ENCODE measurements at regions of chr19 and their contacts with region 1.

Region 1: GRCh38 chr19:24033301-24033962 is 53.6 kb upstream of the ZNF254 start:
- DNase-seq: peak; percentile 95
- H3K4me3 ChIP-seq: peak overlapping the region; percentile 69 to 85 (median 74)
- H3K27ac ChIP-seq: peak overlapping the region; percentile 92 to 96 (median 95)
- H3K4me1 ChIP-seq: peaks cover 0 to 31% (median 24%) of the 10 kb centered on the region in 4 donors
- H3K27me3 ChIP-seq: no peaks in the 10 kb centered on the region
- CTCF ChIP-seq: no peak
- EP300 ChIP-seq: no peak
- POLR2A ChIP-seq: peak; percentile 46 to 63

Region 2: DNA sequence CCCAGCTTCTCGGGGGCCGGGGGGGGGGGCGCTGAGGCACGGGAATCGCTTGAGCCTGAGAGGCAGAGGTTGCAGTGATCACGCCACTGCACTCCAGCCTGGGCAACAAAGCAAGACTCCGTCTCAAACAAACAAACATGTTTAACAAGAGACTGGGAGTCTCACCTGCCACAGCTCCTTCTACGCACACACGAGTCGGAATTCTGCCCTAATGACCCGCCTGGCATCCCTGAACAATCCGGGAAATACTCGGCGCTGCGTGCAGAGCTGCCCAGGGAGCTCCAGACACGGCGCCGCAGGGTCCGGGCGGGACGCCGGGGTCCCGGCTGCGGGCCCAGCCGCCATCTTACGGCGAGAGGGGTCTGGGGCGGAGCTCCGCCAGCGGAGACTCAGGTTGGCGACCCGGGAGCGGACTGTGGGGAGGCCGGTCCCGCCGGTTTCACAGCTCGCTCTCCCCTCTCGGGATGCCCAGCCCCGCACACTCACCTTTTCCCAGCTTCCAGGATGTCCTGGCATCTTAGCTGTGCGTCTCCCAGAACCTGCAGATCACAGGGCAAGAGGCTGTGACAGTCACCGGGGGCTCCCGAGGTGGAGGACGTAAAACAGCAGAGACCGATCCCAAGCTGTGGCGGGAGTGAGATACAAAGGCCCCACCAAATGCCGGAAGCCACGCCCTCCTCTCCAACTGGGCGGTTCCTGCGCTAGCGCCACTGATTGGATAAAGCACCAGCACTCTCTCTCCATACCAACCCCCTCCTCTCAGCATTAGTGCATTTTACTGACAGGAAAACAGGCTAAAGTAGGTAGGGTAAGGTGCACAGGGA is 759.6 kb before region 1 on chr19:
- intact Hi-C with region 1: loop called (anchors 10 kb)
- DNase-seq: peak; percentile 96
- H3K4me3 ChIP-seq: peak overlapping the region; percentile 76 to 96 (median 90)
- H3K27ac ChIP-seq: peak overlapping the region; percentile 83 to 90 (median 90)
- H3K4me1 ChIP-seq: peaks cover 0 to 13% (median 10%) of the 10 kb centered on the region in 4 donors
- H3K27me3 ChIP-seq: no peaks in the 10 kb centered on the region
- CTCF ChIP-seq: no peak
- EP300 ChIP-seq: no peak
- POLR2A ChIP-seq: peak; percentile 65 to 68

Region 3: GRCh38 chr19:23395041-23395721 is 638.3 kb before region 1 on chr19 and contains the start of gene ZNF91:
- intact Hi-C with region 1: loop called (anchors 10 kb)
- DNase-seq: peak; percentile 98
- H3K4me3 ChIP-seq: peak within 1 kb of the TSS; percentile 76 to 90 (median 83)
- H3K27ac ChIP-seq: peak within 1 kb of the TSS; percentile 92 to 97 (median 96)
- H3K4me1 ChIP-seq: peaks cover 0 to 42% (median 23%) of the 10 kb centered on the region in 4 donors
- H3K27me3 ChIP-seq: no peaks in the 10 kb centered on the region
- CTCF ChIP-seq: no peak
- EP300 ChIP-seq: no peak
- POLR2A ChIP-seq: peak; percentile 82 to 87
- total RNA-seq, gene ZNF91: 39.8 to 88.1 (median 58.2) TPM

Region 4: DNA sequence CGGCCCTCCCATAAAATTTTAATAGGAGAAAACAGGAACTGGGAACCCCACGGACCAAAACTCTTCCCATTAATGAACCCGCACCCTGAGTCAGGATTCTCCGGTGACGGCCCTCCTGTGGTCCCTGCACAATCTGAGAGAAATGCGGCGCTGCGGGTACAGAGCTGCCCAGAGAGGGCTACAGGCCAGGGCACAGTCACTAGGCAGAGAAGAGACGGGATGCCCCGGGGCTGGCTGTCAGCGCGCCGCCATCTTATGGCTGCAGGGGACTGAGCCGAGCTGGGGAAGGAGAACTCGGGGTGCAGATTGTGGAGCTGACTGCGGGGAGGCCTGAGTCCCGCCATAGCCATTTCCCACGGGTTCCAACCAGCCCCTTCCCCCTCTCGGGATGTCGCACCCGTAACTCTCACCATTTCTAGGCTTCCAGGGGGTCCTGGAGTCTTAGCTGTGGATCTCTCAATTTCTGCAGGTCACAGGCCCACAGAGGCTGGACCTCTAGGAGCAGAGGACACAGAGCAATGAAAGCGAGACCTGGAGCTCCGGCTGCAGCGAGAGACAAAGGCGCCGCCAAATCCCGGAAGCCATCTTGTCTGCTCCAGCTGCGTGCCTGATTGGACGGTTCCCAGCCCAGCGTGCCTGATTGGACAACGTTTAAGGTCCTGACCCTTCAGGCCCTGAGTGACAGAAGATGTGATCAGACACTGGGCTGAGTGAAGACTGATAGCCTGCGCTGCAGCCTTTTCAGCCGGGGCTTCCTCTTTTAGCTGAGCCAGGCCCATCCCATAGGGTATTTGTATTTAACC is 346.6 kb before region 1 on chr19 and contains the start of gene ZNF675:
- intact Hi-C with region 1: loop called (anchors 5 kb)
- DNase-seq: peak; percentile 96
- H3K4me3 ChIP-seq: peak within 1 kb of the TSS; percentile 64 to 84 (median 81)
- H3K27ac ChIP-seq: peak within 1 kb of the TSS; percentile 80 to 91 (median 84)
- H3K4me1 ChIP-seq: peaks cover 0 to 12% (median 6%) of the 10 kb centered on the region in 4 donors
- H3K27me3 ChIP-seq: no peaks in the 10 kb centered on the region
- CTCF ChIP-seq: no peak
- EP300 ChIP-seq: no peak
- POLR2A ChIP-seq: no peak
- total RNA-seq, gene ZNF675: 5.4 to 8.1 (median 6.7) TPM

Region 5: GRCh38 chr19:23758187-23759074 is 275.0 kb before region 1 on chr19 and contains the start of gene ZNF681:
- intact Hi-C with region 1: loop called (anchors 5 kb)
- DNase-seq: peak; percentile 93
- H3K4me3 ChIP-seq: peak within 1 kb of the TSS; percentile 45 to 70 (median 66)
- H3K27ac ChIP-seq: peak within 1 kb of the TSS; percentile 70 to 75 (median 74)
- H3K4me1 ChIP-seq: peaks cover 0 to 23% (median 7%) of the 10 kb centered on the region in 4 donors
- H3K27me3 ChIP-seq: no peaks in the 10 kb centered on the region
- CTCF ChIP-seq: peak in 1 of 4 experiments; percentile 9
- EP300 ChIP-seq: no peak
- POLR2A ChIP-seq: peak in 1 of 2 donors; percentile 9
- total RNA-seq, gene ZNF681: 0.55 to 1.2 (median 0.70) TPM

Region 6: DNA sequence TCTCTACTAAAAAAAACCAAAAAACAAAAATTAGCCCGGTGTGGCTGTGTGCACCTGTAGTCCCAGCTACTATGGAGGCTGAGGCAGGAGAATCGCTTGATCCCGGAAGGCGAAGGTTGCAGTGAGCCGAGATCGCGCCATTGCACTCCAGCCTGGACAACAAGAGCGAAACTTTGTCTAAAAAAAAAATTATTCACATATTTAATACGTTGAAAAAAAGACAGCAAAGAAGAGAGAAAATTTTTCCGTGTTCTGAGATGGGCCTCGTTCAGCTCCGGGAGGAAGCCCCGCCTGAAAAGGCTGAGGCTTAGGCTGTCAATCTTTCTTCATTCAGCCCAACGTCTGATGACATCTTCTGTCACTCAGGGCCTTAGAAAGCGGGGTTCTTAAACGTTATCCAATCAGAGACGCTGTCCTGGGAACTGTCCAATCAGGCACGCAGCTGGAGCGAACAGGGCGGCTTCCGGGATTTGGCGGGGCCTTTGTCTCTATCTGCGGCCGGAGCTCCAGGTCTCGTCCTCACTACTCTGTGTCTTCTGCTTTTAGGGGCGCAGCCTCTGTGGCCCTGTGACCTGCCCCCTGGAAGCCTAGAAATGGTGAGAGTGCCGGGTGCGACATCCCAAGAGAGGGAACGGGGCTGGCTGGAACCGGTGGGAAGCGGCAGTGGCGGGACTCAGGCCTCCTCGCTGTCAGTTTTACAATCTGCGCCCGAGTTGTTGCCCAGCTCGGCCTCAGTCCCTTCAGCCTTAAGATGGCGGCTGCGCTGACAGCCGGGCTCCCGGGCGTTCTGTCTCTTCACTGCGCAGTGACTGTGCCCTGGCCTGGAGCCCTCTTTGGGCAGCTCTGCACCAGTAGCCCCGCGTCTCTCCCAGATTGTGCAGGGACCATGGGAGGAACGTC is 118.8 kb before region 1 on chr19 and contains the start of gene ZNF726:
- intact Hi-C with region 1: loop called (anchors 5 kb)
- DNase-seq: peak; percentile 90
- H3K4me3 ChIP-seq: peak within 1 kb of the TSS; percentile 38 to 59 (median 56)
- H3K27ac ChIP-seq: peak within 1 kb of the TSS in 2 of 4 donors; percentile 57 to 61
- H3K4me1 ChIP-seq: peaks cover 0 to 9% (median 2%) of the 10 kb centered on the region in 4 donors
- H3K27me3 ChIP-seq: no peaks in the 10 kb centered on the region
- CTCF ChIP-seq: no peak
- EP300 ChIP-seq: no peak
- POLR2A ChIP-seq: no peak
- total RNA-seq, gene ZNF726: 0.54 to 2.5 (median 0.71) TPM in 3 of 4 donors, not detected in the other

Region 7: GRCh38 chr19:24086974-24087595 is 53.7 kb after region 1 on chr19 and contains the start of gene ZNF254:
- intact Hi-C with region 1: loop called (anchors 2 kb)
- DNase-seq: peak; percentile 94
- H3K4me3 ChIP-seq: peak within 1 kb of the TSS; percentile 45 to 78 (median 68)
- H3K27ac ChIP-seq: peak within 1 kb of the TSS; percentile 69 to 84 (median 80)
- H3K4me1 ChIP-seq: peaks cover 0 to 13% (median 6%) of the 10 kb centered on the region in 4 donors
- H3K27me3 ChIP-seq: no peaks in the 10 kb centered on the region
- CTCF ChIP-seq: no peak
- EP300 ChIP-seq: no peak
- POLR2A ChIP-seq: peak; percentile 18 to 48
- total RNA-seq, gene ZNF254: 11.3 to 23.0 (median 18.7) TPM